Activated CD8-positive, alpha-beta memory T cell treated with anti-CD3 and anti-CD28 coated beads, Interleukin-2, amount 10 ng/mL, durations not matched to agents 7 days and 5 days (primary cell): ENCODE measurements at regions of chr14 and their contacts with region 1.

Region 1: DNA sequence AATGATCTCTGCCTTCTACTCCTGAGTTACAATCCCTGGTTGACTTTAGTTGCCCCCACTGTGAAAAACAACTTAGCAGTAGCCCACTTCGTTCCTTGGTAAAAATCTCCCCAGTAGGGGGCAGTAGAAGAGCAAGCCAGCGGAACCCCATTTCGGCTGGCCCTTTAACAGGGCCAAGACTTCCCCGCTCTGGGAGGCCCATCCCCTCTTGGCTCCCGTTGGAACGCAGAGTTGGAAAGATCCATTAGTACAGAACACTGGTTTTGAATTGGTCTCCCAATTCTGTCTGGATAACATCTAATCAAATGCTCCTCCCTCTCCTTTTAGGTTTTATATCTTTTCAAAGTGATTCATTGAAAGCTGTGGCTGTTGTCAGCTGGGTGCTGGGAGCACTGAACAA is 1133.3 kb downstream of the BCL11B start:
- DNase-seq: peak; percentile 76
- ATAC-seq: peak; percentile 82
- H3K4me3 Mint-ChIP-seq: peak overlapping the region; percentile 7
- H3K27ac Mint-ChIP-seq: peak overlapping the region; percentile 53
- H3K4me1 Mint-ChIP-seq: peaks cover 65% of the 10 kb centered on the region
- H3K27me3 Mint-ChIP-seq: no peaks in the 10 kb centered on the region

Region 2: DNA sequence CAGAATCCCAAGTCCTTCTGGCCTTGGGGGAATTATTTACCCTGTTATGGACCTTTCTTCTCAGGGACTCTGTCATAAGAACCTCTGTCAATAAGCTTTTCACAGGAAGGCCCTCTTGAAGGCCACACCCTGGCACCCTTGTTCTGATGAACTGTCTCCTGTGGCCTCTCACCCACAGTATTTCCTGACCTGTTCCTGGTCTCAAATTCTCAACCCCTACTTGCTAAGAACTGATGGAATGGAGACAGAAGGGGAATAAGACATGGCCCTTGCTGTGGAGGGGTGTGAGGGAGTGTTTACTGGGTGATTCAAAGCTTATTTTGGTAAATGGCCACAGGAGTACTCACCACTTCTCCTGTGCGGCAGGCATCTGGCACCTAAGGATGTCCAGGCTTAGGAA is 50.4 kb after region 1 on chr14:
- CTCF ChIA-PET with region 1: interaction called, 94 read pairs
- DNase-seq: peak; percentile 80
- ATAC-seq: peak; percentile 73
- H3K4me3 Mint-ChIP-seq: peak overlapping the region; percentile 79
- H3K27ac Mint-ChIP-seq: peak overlapping the region; percentile 98
- H3K4me1 Mint-ChIP-seq: peaks cover 90% of the 10 kb centered on the region
- H3K27me3 Mint-ChIP-seq: no peaks in the 10 kb centered on the region

Region 3: GRCh38 chr14:98198385-98198784 is 59.7 kb after region 1 on chr14:
- CTCF ChIA-PET with region 1: interaction called, 94 read pairs
- DNase-seq: peak; percentile 89
- ATAC-seq: peak; percentile 83
- H3K4me3 Mint-ChIP-seq: peak overlapping the region; percentile 34
- H3K27ac Mint-ChIP-seq: peak overlapping the region; percentile 83
- H3K4me1 Mint-ChIP-seq: peaks cover 58% of the 10 kb centered on the region
- H3K27me3 Mint-ChIP-seq: no peaks in the 10 kb centered on the region

Region 4: GRCh38 chr14:98227000-98227726 is 88.5 kb after region 1 on chr14:
- CTCF ChIA-PET with region 1: interaction called, 11 read pairs
- DNase-seq: peak; percentile 67
- ATAC-seq: peak; percentile 80
- H3K4me3 Mint-ChIP-seq: peak overlapping the region; percentile 8
- H3K27ac Mint-ChIP-seq: peak overlapping the region; percentile 85
- H3K4me1 Mint-ChIP-seq: peaks cover 55% of the 10 kb centered on the region
- H3K27me3 Mint-ChIP-seq: no peaks in the 10 kb centered on the region

Region 5: DNA sequence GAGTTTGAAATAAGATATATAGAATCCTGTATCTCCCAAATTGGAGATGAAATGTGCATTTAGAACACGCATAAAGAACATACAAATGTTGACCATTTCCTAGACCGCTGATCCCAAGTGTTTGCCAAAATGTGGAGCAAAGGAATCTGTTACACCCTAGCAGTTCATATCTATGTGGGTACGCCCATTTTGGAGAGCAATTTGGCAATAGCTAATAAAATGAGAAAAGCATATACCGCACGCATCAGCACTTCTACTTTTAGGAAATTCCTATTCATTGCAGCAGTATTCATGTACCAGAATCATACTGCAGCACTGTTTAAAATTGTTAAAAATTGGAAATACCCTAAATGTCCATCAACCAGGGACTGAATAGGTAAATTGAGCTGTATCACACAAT is 195.5 kb after region 1 on chr14:
- CTCF ChIA-PET with region 1: no interaction called
- DNase-seq: no peak
- ATAC-seq: no peak
- H3K4me3 Mint-ChIP-seq: no peak overlapping the region
- H3K27ac Mint-ChIP-seq: no peak overlapping the region
- H3K4me1 Mint-ChIP-seq: no peaks in the 10 kb centered on the region
- H3K27me3 Mint-ChIP-seq: no peaks in the 10 kb centered on the region